ENCODE measurements at regions of chr11 and their contacts with region 1.

Region 1: GRCh38 chr11:9314291-9315036 is at the start of gene TMEM41B:
- DNase-seq: peak; percentile 98
- H3K4me3 ChIP-seq: peak within 1 kb of the TSS; percentile 60 to 98 (median 93)
- H3K27ac ChIP-seq: peak within 1 kb of the TSS; percentile 87
- H3K4me1 ChIP-seq: peaks cover 15% of the 10 kb centered on the region
- H3K27me3 ChIP-seq: no peaks in the 10 kb centered on the region
- CTCF ChIP-seq: no peak
- POLR2A ChIP-seq: peak; percentile 80
- total RNA-seq, gene TMEM41B: 38.6 and 39.0 TPM in 2 replicates

Region 2: GRCh38 chr11:9363954-9364912 is 49.8 kb after region 1 on chr11:
- CTCF ChIA-PET with region 1: no interaction called
- POLR2A ChIA-PET with region 1: no interaction called
- dilution Hi-C with region 1: no loop called
- intact Hi-C with region 1: loop called (anchors 1 kb)
- DNase-seq: peak; percentile 96
- H3K4me3 ChIP-seq: peak overlapping the region in 2 of 3 experiments; percentile 23 to 46
- H3K27ac ChIP-seq: peak overlapping the region; percentile 92
- H3K4me1 ChIP-seq: peaks cover 17% of the 10 kb centered on the region
- H3K27me3 ChIP-seq: no peaks in the 10 kb centered on the region
- CTCF ChIP-seq: no peak
- POLR2A ChIP-seq: peak; percentile 67

Region 3: GRCh38 chr11:9489080-9489765 is 174.8 kb after region 1 on chr11:
- CTCF ChIA-PET with region 1: no interaction called
- POLR2A ChIA-PET with region 1: no interaction called
- dilution Hi-C with region 1: no loop called
- intact Hi-C with region 1: no loop called
- DNase-seq: no peak
- H3K4me3 ChIP-seq: no peak overlapping the region
- H3K27ac ChIP-seq: no peak overlapping the region
- H3K4me1 ChIP-seq: peaks cover 5% of the 10 kb centered on the region
- H3K27me3 ChIP-seq: no peaks in the 10 kb centered on the region
- CTCF ChIP-seq: no peak
- POLR2A ChIP-seq: no peak